CD4-positive, alpha-beta memory T cell (primary cell): ENCODE measurements at regions of chr17 and their contacts with region 1.

Region 1: DNA sequence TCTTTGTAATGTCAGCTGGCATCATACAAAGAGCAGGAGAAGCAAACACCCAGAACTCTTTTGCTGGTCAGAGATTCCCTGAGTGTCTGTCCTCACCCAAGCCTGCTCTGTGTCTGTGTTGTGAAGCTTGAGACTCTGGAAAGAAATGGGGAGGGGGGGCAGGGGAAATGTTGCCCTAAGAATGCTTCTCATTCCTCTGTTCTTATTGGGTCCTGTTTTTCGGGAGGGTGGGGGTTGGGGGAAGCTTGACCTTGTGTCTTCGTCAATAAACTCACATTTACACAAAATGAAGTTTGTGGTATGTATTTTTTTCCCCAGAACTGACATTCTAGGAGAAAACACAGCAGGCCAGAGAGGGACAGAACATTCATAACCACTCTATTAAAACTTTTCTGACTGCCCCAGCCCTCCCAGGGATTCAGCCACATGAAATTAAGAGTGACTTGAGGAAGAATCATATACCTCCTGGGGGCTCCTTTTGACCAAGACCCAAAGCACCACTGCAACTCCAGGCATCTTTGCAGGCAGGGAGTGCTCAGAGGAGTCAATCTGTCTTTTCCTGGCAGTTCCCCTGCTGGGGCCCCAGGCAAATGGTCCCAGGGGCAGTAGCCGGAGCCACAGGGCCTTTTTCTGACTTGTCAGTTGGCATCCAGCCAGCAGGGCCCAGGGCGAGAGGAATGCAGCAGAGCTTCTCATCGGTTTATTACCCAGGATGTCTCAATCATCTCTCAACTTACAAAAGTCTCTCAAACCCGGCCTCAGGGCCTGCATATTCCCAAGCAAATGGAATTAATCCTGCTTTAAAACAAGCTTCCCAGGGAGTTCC is 5.1 kb upstream of the RASL10B start:
- DNase-seq: no peak
- H3K4me3 ChIP-seq: no peak overlapping the region
- H3K4me3 Mint-ChIP-seq: no peak overlapping the region
- H3K27ac ChIP-seq: no peak overlapping the region
- H3K27ac Mint-ChIP-seq: no peak overlapping the region
- H3K4me1 ChIP-seq: peaks cover 11% of the 10 kb centered on the region
- H3K4me1 Mint-ChIP-seq: peaks cover 9 to 24% (median 12%) of the 10 kb centered on the region in 4 donors
- H3K27me3 ChIP-seq: no peaks in the 10 kb centered on the region
- H3K27me3 Mint-ChIP-seq: no peaks in the 10 kb centered on the region

Region 2: GRCh38 chr17:35666967-35667532 is 59.3 kb before region 1 on chr17:
- CTCF ChIA-PET with region 1: no interaction called
- POLR2A ChIA-PET with region 1: no interaction called
- intact Hi-C with region 1: loop called (anchors 10 kb)
- DNase-seq: no peak
- H3K4me3 ChIP-seq: no peak overlapping the region
- H3K4me3 Mint-ChIP-seq: no peak overlapping the region
- H3K27ac ChIP-seq: no peak overlapping the region
- H3K27ac Mint-ChIP-seq: peak overlapping the region in 2 of 7 donors; percentile 19 to 60
- H3K4me1 ChIP-seq: no peaks in the 10 kb centered on the region
- H3K4me1 Mint-ChIP-seq: peaks cover 0 to 9% (median 5%) of the 10 kb centered on the region in 4 donors
- H3K27me3 ChIP-seq: no peaks in the 10 kb centered on the region
- H3K27me3 Mint-ChIP-seq: no peaks in the 10 kb centered on the region